A549 (cell line): ENCODE measurements at regions of chr11 and their contacts with region 1.

Region 1: DNA sequence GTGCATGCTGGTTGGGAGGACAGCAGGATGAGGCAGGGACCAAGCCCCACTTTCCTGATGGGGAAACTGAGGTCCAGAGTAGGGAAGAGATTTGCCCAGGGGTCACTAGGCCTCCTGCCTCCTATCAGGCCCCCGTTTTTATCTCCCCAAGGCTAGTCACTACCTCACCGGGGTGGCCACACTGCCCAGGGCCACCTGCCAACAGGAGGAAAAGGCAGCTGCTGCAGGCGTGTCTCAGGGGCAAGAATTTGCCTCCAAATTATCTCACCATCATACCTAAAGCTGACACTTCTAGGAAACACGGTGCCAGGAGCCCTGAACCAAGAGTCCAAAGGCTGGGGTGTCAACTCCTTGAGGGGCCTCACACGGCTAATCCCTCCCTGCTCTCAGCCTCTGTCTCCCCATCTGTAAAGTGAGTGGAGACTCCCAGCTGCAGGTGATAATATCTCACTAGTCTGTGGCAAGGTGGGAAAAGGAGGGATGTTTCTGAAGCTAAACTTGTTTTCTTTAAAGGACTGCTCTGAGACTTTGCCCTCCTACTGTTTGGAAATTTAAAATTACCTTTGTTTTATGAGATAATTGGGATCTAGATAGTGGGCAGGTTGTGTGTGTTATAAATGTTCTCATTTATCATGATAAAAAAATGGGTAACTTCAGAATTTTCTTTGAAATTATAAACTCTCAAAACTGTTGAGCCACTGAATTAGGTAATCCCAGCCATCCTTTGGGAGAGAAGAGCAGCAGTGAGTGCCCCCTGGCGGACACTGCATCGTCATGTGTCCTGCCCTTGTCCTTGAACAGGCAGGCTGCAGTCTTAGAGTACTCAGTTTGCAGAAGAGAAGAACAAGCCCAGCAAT is 60.0 kb downstream of the MYO7A start:
- DNase-seq: peak; percentile 77 to 94
- ATAC-seq: peak; percentile 36 to 64; a peak in 3 of 6 replicates
- H3K4me3 ChIP-seq: no peak overlapping the region
- H3K27ac ChIP-seq: no peak overlapping the region
- H3K4me1 ChIP-seq: no peaks in the 10 kb centered on the region
- CTCF ChIP-seq: peak; percentile 93
- EP300 ChIP-seq: no peak
- POLR2A ChIP-seq: no peak
- RAD21 ChIP-seq: peak; percentile 78

Region 2: GRCh38 chr11:77121096-77121640 is 66.8 kb before region 1 on chr11:
- CTCF ChIA-PET with region 1: interaction called, 161 read pairs
- POLR2A ChIA-PET with region 1: no interaction called
- DNase-seq: no peak
- ATAC-seq: no peak
- H3K4me3 ChIP-seq: no peak overlapping the region
- H3K27ac ChIP-seq: no peak overlapping the region
- H3K4me1 ChIP-seq: no peaks in the 10 kb centered on the region
- CTCF ChIP-seq: no peak
- EP300 ChIP-seq: no peak
- POLR2A ChIP-seq: no peak
- RAD21 ChIP-seq: no peak

Region 3: DNA sequence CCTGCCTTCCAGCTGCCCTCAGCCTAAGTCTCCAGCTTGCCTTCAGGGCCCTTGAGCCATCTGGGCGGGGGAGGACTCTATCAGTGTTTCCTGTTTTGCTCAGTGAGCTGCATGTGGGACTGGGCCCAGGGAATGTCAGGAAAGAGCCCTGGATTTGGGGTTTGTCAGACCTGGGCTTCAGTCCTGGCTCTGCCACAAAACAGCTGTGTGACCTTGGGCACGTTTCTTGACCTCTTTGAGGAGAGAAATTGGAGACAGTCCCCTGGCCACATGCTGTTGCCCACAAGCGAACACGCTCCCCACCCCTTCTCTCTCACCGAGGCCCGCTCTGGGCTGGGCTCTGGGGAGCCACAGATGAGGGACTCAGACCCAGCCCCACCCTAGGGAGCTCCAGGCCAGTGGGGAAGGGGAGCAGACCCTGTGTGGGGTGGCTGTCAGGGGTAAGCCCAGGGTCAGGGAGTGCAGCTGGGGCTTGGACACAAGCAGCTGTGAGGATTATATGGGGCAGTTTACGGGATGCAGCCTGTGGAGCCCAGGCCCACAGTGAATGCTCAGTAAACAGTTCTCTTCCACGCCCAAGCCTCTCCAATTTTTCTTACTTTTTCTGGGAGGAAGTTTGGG is 47.7 kb before region 1 on chr11:
- CTCF ChIA-PET with region 1: interaction called, 10 read pairs
- POLR2A ChIA-PET with region 1: no interaction called
- DNase-seq: no peak
- ATAC-seq: peak in 1 of 2 experiments; percentile 18; a peak in 1 of 6 replicates
- H3K4me3 ChIP-seq: no peak overlapping the region
- H3K27ac ChIP-seq: no peak overlapping the region
- H3K4me1 ChIP-seq: peaks cover 3% of the 10 kb centered on the region; the same call in 1 of the 3 replicates
- CTCF ChIP-seq: no peak
- EP300 ChIP-seq: no peak
- POLR2A ChIP-seq: no peak
- RAD21 ChIP-seq: no peak

Region 4: GRCh38 chr11:77175869-77176539 is 12.0 kb before region 1 on chr11:
- CTCF ChIA-PET with region 1: interaction called, 90 read pairs
- POLR2A ChIA-PET with region 1: no interaction called
- DNase-seq: no peak
- ATAC-seq: no peak
- H3K4me3 ChIP-seq: no peak overlapping the region
- H3K27ac ChIP-seq: no peak overlapping the region
- H3K4me1 ChIP-seq: no peaks in the 10 kb centered on the region
- CTCF ChIP-seq: no peak
- EP300 ChIP-seq: no peak
- POLR2A ChIP-seq: no peak
- RAD21 ChIP-seq: no peak

Region 5: GRCh38 chr11:77198440-77198849 is 10.4 kb after region 1 on chr11:
- CTCF ChIA-PET with region 1: interaction called, 13 read pairs
- POLR2A ChIA-PET with region 1: no interaction called
- DNase-seq: peak; percentile 36 to 53
- ATAC-seq: peak in 1 of 2 experiments; percentile 80; a peak in 3 of 6 replicates
- H3K4me3 ChIP-seq: no peak overlapping the region
- H3K27ac ChIP-seq: no peak overlapping the region
- H3K4me1 ChIP-seq: no peaks in the 10 kb centered on the region
- CTCF ChIP-seq: 0 out of 3 replicates have a peak, but pooled peaks have one; percentile 9
- EP300 ChIP-seq: no peak
- POLR2A ChIP-seq: no peak
- RAD21 ChIP-seq: no peak

Region 6: DNA sequence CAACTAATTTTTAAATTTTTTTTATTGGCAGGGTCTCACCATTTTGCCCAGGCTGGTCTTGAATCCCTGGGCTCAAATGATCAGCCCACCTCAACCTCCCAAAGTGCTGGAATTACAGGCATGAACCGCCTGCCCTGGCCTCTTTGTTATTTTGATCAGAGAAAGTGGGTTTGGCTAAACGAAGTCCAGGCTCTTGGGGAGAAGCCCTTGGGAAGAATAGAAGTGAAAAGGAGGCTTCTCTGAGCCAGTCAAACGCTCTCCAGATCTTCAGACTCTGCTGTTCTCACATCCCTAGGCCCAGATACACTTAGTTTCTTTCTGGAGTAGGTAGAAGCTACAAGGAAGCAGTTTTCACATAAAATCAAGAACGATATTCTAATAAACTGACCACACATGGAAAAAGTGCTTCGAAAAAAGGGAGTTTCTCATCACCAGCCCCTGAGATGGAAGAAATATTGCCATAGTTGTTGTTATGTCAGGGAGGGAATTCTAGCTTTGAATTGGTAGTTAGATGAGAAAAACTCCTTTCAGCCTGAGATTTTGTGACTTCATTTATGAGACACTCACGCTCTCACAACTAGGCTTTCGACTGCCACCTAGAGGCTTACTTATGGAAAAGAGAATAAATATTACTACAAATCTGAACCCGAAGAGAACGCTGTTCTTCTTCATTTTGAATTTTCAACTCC is 360.0 kb after region 1 on chr11:
- CTCF ChIA-PET with region 1: interaction called, 84 read pairs
- POLR2A ChIA-PET with region 1: no interaction called
- DNase-seq: peak; percentile 57 to 74
- ATAC-seq: peak; percentile 86 to 89
- H3K4me3 ChIP-seq: no peak overlapping the region
- H3K27ac ChIP-seq: no peak overlapping the region
- H3K4me1 ChIP-seq: no peaks in the 10 kb centered on the region
- CTCF ChIP-seq: peak; percentile 88
- EP300 ChIP-seq: no peak
- POLR2A ChIP-seq: no peak
- RAD21 ChIP-seq: peak; percentile 88 to 89

Region 7: GRCh38 chr11:77619576-77620198 is 431.7 kb after region 1 on chr11:
- CTCF ChIA-PET with region 1: interaction called, 11 read pairs
- POLR2A ChIA-PET with region 1: no interaction called
- DNase-seq: peak; percentile 12 to 61
- ATAC-seq: peak in 1 of 2 experiments; percentile 76; a peak in 4 of 6 replicates
- H3K4me3 ChIP-seq: no peak overlapping the region
- H3K27ac ChIP-seq: no peak overlapping the region
- H3K4me1 ChIP-seq: no peaks in the 10 kb centered on the region
- CTCF ChIP-seq: peak; percentile 84
- EP300 ChIP-seq: no peak
- POLR2A ChIP-seq: no peak
- RAD21 ChIP-seq: peak; percentile 78 to 80